Naive thymus-derived CD4-positive, alpha-beta T cell (primary cell): ENCODE measurements at regions of chr3 and their contacts with region 1.

Region 1: DNA sequence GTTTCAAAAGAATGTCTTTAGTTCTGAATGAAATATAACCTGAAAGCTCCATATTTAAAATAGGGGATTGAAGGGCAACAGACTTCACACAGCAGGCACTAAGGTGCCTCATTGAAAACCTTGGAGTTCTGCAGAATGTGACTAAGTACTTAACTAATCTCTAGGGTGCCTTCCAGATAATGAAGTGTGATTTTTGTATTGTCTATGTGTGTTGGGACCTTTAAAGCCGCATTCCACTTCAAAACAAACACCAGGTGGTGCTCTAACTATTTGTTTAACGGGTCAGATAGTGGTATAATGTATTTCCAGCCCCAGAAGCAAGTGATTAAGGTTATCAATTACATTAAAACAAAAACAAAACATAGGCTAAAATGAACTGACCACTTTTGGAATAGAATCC is 28.0 kb downstream of the TFG start:
- DNase-seq: peak in 3 of 9 donors; percentile 1 to 11 (median 4)
- ATAC-seq: no peak
- H3K4me3 ChIP-seq: no peak overlapping the region
- H3K4me3 Mint-ChIP-seq: no peak overlapping the region
- H3K27ac ChIP-seq: no peak overlapping the region
- H3K27ac Mint-ChIP-seq: no peak overlapping the region
- H3K4me1 ChIP-seq: no peaks in the 10 kb centered on the region
- H3K4me1 Mint-ChIP-seq: peaks cover 4 to 16% (median 11%) of the 10 kb centered on the region in 7 donors
- H3K27me3 ChIP-seq: no peaks in the 10 kb centered on the region
- H3K27me3 Mint-ChIP-seq: no peaks in the 10 kb centered on the region

Region 2: DNA sequence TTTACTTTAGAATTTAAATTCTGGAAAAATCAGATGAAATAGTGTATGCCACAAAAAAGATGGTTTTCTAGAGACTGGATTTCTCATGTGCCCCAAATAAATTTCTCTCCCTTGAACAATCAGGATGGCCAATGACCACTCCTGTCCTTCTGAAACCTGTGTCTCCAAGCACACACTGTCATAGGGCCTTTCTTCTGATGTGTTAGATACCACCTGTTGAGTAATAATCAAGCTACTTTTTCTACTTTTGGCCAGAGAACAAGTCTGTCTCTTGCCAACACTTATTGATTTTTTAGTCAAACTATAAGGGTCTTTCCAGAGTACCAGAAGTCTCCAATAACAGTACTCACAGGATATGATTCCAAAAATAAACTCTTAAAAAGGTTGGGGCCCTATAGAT is 44.1 kb before region 1 on chr3:
- CTCF ChIA-PET with region 1: no interaction called
- POLR2A ChIA-PET with region 1: no interaction called
- intact Hi-C with region 1: no loop called
- DNase-seq: no peak
- ATAC-seq: no peak
- H3K4me3 ChIP-seq: no peak overlapping the region
- H3K4me3 Mint-ChIP-seq: no peak overlapping the region
- H3K27ac ChIP-seq: no peak overlapping the region
- H3K27ac Mint-ChIP-seq: no peak overlapping the region
- H3K4me1 ChIP-seq: no peaks in the 10 kb centered on the region
- H3K4me1 Mint-ChIP-seq: no peaks in the 10 kb centered on the region
- H3K27me3 ChIP-seq: no peaks in the 10 kb centered on the region
- H3K27me3 Mint-ChIP-seq: peaks cover 34 to 58% (median 56%) of the 10 kb centered on the region in 5 donors

Region 3: GRCh38 chr3:100796556-100796955 is 59.2 kb after region 1 on chr3:
- CTCF ChIA-PET with region 1: no interaction called
- POLR2A ChIA-PET with region 1: no interaction called
- intact Hi-C with region 1: loop called in 1 of 2 experiments (anchors 1 kb)
- DNase-seq: peak in 1 of 9 donors; percentile 1
- ATAC-seq: no peak
- H3K4me3 ChIP-seq: no peak overlapping the region
- H3K4me3 Mint-ChIP-seq: peak overlapping the region in 6 of 10 donors; percentile 22 to 68 (median 48)
- H3K27ac ChIP-seq: no peak overlapping the region
- H3K27ac Mint-ChIP-seq: peak overlapping the region in 2 of 9 donors; percentile 43 to 51
- H3K4me1 ChIP-seq: no peaks in the 10 kb centered on the region
- H3K4me1 Mint-ChIP-seq: peaks cover 0 to 7% (median 5%) of the 10 kb centered on the region in 7 donors
- H3K27me3 ChIP-seq: no peaks in the 10 kb centered on the region
- H3K27me3 Mint-ChIP-seq: peaks cover 0 to 22% (median 0%) of the 10 kb centered on the region in 5 donors

Region 4: GRCh38 chr3:101381809-101382208 is 644.5 kb after region 1 on chr3:
- CTCF ChIA-PET with region 1: no interaction called
- POLR2A ChIA-PET with region 1: no interaction called
- intact Hi-C with region 1: loop called (anchors 5 to 10 kb)
- DNase-seq: peak in 6 of 9 donors; percentile 10 to 42 (median 24)
- ATAC-seq: peak; percentile 69
- H3K4me3 ChIP-seq: no peak overlapping the region
- H3K4me3 Mint-ChIP-seq: no peak overlapping the region
- H3K27ac ChIP-seq: no peak overlapping the region
- H3K27ac Mint-ChIP-seq: peak overlapping the region in 1 of 9 donors; percentile 40
- H3K4me1 ChIP-seq: no peaks in the 10 kb centered on the region
- H3K4me1 Mint-ChIP-seq: peaks cover 31 to 89% (median 73%) of the 10 kb centered on the region in 7 donors
- H3K27me3 ChIP-seq: no peaks in the 10 kb centered on the region
- H3K27me3 Mint-ChIP-seq: no peaks in the 10 kb centered on the region